HepG2 (cell line): ENCODE measurements at regions of chr17 and their contacts with region 1.

Region 1: DNA sequence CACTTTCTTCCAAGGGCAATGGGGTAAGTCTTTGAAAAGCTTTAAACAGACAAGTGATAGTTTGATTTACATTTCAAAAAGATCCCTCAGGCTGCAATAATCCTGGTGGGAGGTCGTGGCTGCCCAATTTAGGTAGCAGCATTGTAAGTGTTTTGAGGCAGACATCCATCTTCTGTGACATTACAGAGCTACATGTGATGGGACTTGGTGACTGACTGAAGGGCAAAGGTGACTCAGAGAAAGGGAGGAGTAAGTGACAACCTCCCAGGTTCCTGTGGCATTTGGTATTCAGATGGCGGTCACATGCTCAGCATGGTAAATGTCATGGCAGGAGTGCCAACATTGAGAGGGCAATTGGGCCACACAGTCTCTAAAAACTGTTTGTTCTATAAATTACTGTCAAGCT is 26.5 kb downstream of the STAT3 start:
- DNase-seq: peak; percentile 34
- ATAC-seq: peak; percentile 62
- H3K4me3 ChIP-seq: no peak overlapping the region
- H3K27ac ChIP-seq: no peak overlapping the region
- H3K4me1 ChIP-seq: peaks cover 38% of the 10 kb centered on the region
- H3K27me3 ChIP-seq: no peaks in the 10 kb centered on the region
- CTCF ChIP-seq: no peak
- EP300 ChIP-seq: no peak
- POLR2A ChIP-seq: no peak
- RAD21 ChIP-seq: no peak

Region 2: GRCh38 chr17:42399948-42400843 is 38.4 kb after region 1 on chr17:
- CTCF ChIA-PET with region 1: no interaction called
- POLR2A ChIA-PET with region 1: interaction called, 4 read pairs
- in situ Hi-C with region 1: no loop called
- intact Hi-C with region 1: loop called (anchors 1 kb)
- DNase-seq: no peak
- ATAC-seq: peak; percentile 71
- H3K4me3 ChIP-seq: no peak overlapping the region
- H3K27ac ChIP-seq: no peak overlapping the region
- H3K4me1 ChIP-seq: peaks cover 30% of the 10 kb centered on the region
- H3K27me3 ChIP-seq: no peaks in the 10 kb centered on the region
- CTCF ChIP-seq: no peak
- EP300 ChIP-seq: no peak
- POLR2A ChIP-seq: no peak
- RAD21 ChIP-seq: no peak